Activated naive CD8-positive, alpha-beta T cell treated with anti-CD3 and anti-CD28 coated beads, Interleukin-2, amount 10 ng/mL, durations not matched to agents 7 days and 5 days (primary cell): ENCODE measurements at regions of chr20 and their contacts with region 1.

Region 1: GRCh38 chr20:45890985-45891983 is at the starts of genes CTSA and NEURL2:
- DNase-seq: peak; percentile 88
- ATAC-seq: peak; percentile 73
- H3K4me3 Mint-ChIP-seq: peak within 1 kb of the TSS; percentile 92
- H3K27ac Mint-ChIP-seq: peak within 1 kb of the TSS; percentile 86
- H3K4me1 Mint-ChIP-seq: peaks cover 27% of the 10 kb centered on the region
- H3K27me3 Mint-ChIP-seq: no peaks in the 10 kb centered on the region
- total RNA-seq, gene CTSA: 76.9 to 83.4 TPM
- total RNA-seq, gene NEURL2: 3.9 to 5.3 TPM

Region 2: DNA sequence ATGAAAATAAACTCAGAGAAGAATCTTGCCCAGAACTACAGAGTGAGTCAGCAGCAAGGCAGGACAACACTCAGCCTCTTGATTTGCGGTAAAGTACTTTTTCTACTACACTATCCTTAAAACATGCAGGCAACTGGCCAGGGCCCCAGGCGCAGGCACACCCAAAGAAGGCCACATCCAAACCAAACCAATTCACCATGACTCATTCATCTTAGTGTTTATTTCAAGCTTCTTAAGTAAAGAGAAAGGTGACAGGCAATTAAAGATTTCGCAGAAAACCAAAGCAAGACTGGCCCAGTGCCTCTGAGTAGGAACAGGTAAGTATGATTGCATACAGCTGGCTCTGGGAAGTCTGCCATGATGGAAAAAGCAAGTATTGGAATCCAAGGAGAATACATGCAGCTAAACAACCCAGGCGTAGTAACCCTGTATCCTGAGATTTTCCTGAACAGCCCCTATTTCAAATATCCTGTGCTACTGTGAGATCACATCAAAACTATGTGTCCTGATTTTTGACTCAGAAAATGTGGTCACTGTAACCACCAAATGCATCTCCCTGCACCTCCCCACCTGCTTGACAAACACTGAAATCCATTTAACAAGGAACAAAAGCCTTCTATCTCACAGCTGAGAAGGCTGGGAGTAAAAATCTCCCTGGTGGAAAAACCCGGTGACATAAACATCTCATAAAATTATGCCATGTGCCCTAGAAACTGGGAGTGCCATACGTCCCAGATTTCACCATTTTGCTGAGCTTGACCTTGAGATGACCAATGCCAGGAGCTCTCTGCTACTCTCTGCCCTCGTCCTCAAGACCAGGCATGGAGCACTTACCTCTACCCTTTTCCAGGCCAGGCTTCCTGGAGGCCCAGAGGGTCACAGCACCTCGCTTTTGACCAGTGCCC is 112.0 kb before region 1 on chr20:
- POLR2A ChIA-PET with region 1: no interaction called
- DNase-seq: no peak
- ATAC-seq: no peak
- H3K4me3 Mint-ChIP-seq: no peak overlapping the region
- H3K27ac Mint-ChIP-seq: no peak overlapping the region
- H3K4me1 Mint-ChIP-seq: peaks cover 19% of the 10 kb centered on the region
- H3K27me3 Mint-ChIP-seq: peaks cover 6% of the 10 kb centered on the region

Region 3: GRCh38 chr20:45845452-45845851 is 45.8 kb before region 1 on chr20:
- POLR2A ChIA-PET with region 1: no interaction called
- DNase-seq: no peak
- ATAC-seq: no peak
- H3K4me3 Mint-ChIP-seq: no peak overlapping the region
- H3K27ac Mint-ChIP-seq: no peak overlapping the region
- H3K4me1 Mint-ChIP-seq: no peaks in the 10 kb centered on the region
- H3K27me3 Mint-ChIP-seq: no peaks in the 10 kb centered on the region

Region 4: GRCh38 chr20:45863543-45864470 is 27.5 kb before region 1 on chr20:
- POLR2A ChIA-PET with region 1: no interaction called
- DNase-seq: no peak
- ATAC-seq: no peak
- H3K4me3 Mint-ChIP-seq: no peak overlapping the region
- H3K27ac Mint-ChIP-seq: no peak overlapping the region
- H3K4me1 Mint-ChIP-seq: peaks cover 7% of the 10 kb centered on the region
- H3K27me3 Mint-ChIP-seq: no peaks in the 10 kb centered on the region

Region 5: DNA sequence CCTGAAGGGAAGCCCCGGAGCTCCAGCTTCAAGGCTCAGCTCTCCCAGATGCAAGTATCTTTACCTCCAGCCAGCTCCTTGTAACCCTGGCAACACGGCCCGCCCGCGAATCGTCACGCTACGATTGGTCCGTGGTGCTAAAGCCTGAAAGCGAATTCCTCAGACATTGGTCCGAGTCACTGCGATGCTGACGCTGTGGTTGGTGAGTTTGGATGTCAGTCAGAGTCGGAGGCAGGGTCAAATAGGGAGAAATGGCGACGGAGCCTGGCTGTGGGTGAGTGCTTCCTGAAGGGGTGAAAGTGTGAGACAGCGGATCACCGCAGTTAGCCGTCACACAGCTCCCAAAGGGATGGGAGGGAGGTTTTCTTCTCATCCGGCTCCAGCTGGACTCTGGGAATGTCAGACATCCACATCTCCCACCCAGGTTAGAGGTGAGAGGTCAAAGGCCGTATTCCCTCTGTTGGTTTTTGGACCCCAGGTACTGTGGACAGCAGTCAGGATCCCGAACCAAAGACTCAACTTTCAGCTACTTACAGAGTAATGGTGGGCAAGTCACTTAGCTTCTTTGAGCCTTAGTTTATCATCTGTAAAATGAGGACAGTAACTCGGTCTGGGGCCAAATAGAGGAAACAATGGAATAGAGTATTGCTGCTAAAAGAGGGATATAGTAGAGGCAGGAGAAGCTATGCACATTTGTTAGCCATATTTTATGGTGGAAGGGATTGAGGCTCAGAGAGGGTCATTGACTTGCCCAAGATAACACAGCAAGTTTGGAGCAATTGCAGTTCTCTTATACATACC is 10.1 kb before region 1 on chr20 and contains the start of gene ZSWIM1:
- POLR2A ChIA-PET with region 1: interaction called, 25 read pairs
- DNase-seq: peak; percentile 97
- ATAC-seq: peak; percentile 99
- H3K4me3 Mint-ChIP-seq: peak within 1 kb of the TSS; percentile 87
- H3K27ac Mint-ChIP-seq: peak within 1 kb of the TSS; percentile 85
- H3K4me1 Mint-ChIP-seq: peaks cover 40% of the 10 kb centered on the region
- H3K27me3 Mint-ChIP-seq: no peaks in the 10 kb centered on the region
- total RNA-seq, gene ZSWIM1: 12.2 to 13.0 TPM

Region 6: DNA sequence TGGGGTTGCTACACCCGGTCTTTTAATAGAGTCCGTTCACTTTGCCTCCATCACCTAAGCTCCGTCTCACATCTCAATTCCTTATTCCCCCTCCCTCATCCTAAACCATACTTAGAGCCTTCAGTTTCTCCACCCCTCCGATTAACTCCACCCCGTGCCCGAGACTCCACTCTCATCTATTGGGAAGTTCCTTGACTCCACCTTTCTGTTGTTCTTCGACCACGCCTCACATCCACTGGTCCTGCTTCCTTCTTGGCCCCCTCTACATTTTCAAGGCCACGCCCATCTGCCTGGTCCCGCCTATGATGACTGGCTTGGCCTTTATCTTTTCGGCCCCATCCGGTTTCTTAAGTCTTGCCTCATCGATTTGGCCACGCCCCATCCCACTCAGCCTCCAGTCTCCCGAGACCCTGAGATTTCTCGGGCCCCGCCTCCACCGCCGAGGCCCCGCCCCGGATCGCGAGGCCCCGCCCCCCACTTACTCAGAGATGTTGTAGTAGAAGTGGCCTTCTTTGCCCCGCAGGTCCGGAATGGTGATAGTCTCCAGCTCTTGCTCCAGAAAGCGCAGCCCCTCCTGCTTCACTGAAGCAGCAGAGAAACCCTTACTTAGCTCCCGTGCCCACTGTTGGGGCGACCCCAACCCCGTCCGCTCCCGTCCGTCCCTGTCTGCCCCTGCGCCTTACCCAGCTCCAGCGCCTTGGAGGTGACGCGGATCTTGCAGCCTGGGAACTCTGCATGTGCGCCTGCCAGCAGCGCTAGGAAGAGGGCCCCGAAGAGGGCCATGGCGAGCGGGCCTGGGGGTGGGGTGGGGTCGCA is 19.6 kb after region 1 on chr20:
- POLR2A ChIA-PET with region 1: interaction called, 10 read pairs
- DNase-seq: peak; percentile 97
- ATAC-seq: peak; percentile 93
- H3K4me3 Mint-ChIP-seq: peak overlapping the region; percentile 72
- H3K27ac Mint-ChIP-seq: peak overlapping the region; percentile 82
- H3K4me1 Mint-ChIP-seq: peaks cover 14% of the 10 kb centered on the region
- H3K27me3 Mint-ChIP-seq: peaks cover 9% of the 10 kb centered on the region